ENCODE measurements at regions of chr7 and their contacts with region 1.

Region 1: GRCh38 chr7:97179454-97180104 is 62.1 kb downstream of the SDHAF3 start:
- DNase-seq: no peak

Region 2: DNA sequence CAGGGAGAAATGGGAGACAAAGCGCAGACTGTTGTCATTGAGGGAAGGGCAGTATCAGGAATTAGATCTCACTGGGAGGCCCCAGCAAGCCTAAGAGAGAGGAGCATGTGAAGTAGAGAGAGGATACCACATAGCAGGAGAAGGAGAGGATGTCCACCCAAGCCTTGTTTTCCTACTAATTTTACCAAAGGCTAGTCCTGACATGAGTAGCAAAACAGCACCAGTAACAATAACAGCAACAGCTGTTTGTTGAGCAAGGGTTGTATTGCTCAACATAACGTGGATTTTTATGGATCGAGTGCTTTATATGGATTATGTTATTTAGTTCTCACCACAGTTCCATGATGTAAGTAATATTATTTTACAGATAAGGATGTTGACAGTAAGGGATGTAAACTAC is 309.4 kb before region 1 on chr7:
- intact Hi-C with region 1: no loop called
- DNase-seq: no peak

Region 3: DNA sequence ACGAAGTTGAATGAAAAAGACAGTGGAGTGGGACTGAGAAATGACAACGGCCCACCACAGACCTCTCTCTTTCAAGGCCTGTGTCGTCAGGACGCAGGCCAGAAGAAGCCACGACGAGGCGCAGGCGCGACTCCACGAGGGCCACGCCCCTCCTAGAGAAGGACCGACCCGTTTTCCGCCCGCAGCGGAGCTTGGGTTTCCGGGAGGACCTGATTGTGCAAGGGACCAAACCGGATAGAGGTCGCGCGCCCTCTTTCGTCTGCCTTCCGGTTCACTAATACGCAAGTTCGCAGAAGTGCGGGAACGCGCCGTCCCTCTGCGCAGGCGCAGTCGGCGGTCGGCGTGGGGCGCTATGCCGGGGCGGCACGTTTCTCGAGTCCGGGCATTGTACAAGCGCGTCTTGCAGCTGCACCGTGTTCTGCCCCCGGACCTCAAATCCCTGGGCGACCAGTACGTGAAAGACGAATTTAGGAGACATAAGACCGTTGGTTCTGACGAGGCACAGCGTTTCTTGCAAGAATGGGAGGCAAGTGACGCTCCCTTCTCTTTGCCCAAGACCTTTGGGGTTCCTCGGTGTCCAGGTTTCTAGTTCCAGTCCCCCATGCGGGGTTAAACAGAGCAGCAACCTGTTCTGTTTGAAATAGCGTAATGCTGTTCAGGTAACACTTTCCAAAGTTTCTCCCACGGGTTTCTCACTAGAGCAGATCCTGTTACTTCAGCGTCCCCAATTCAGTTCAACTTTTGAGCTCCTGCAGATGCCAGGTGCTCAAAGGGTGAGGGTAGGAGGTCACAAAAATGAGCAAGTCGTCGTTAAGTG is 62.0 kb before region 1 on chr7 and contains the start of gene SDHAF3:
- intact Hi-C with region 1: loop called in 1 of 2 experiments (anchors 10 kb)
- DNase-seq: peak; percentile 99
- total RNA-seq, gene SDHAF3: 12.7 to 14.2 TPM

Measured in posterior vena cava (tissue), 2 donors.